ENCODE measurements at regions of chr3 and their contacts with region 1.

Region 1: GRCh38 chr3:127779747-127780146 is 42.6 kb downstream of the MGLL start:
- DNase-seq: peak; percentile 68
- CTCF ChIP-seq: no peak

Region 2: GRCh38 chr3:127768346-127769008 is 11.3 kb before region 1 on chr3:
- CTCF ChIA-PET with region 1: interaction called, 19 read pairs
- POLR2A ChIA-PET with region 1: interaction called, 4 read pairs
- DNase-seq: no peak
- CTCF ChIP-seq: no peak

Region 3: DNA sequence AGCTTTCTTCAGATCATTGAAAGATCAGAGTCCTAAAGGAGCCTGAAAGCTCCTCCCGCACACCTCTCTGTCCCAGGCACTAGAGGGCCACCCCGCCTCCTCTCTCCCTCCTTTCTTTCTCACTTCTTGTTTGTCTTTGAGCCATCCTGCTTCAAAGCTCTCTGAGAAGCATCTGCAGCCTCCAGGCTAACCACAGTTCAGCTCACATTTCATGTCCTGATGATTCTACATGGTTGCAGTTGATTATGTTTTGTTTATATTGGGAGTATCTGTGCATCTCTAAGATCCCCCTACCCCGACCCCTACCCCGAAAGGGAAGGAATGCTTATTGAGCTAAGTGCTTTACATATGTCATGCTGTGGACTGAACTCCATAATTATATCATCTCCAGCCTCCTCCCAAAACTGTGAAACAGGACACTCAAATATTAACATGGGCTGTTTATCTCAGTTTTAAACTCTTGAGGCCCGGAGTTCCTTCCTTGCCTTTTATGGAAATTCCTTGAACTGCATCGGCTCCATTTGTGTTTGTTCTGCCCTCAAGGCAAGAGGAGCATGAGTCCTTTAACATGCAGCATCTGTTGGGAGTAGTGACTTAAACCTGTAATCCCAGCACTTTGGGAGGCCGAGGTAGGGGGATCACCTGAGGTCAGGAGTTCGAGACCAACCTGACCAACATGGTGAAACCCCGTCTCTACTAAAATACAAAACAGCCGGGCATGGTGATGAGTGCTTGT is 11.6 kb after region 1 on chr3:
- CTCF ChIA-PET with region 1: interaction called, 11 read pairs
- POLR2A ChIA-PET with region 1: no interaction called
- DNase-seq: peak; percentile 81
- CTCF ChIP-seq: peak; percentile 67

Region 4: GRCh38 chr3:128153156-128154041 is 373.7 kb after region 1 on chr3 and contains the start of gene EEFSEC:
- CTCF ChIA-PET with region 1: no interaction called
- POLR2A ChIA-PET with region 1: no interaction called
- DNase-seq: peak; percentile 88
- CTCF ChIP-seq: no peak

Measured in GM10248 (cell line).